HepG2 (cell line): ENCODE measurements at regions of chr12 and their contacts with region 1.

Region 1: GRCh38 chr12:81797100-81797499 is 38.0 kb upstream of the PPFIA2 start:
- DNase-seq: peak; percentile 6
- ATAC-seq: peak; percentile 66
- H3K4me3 ChIP-seq: no peak overlapping the region
- H3K27ac ChIP-seq: no peak overlapping the region
- H3K4me1 ChIP-seq: no peaks in the 10 kb centered on the region
- H3K27me3 ChIP-seq: no peaks in the 10 kb centered on the region
- CTCF ChIP-seq: no peak
- EP300 ChIP-seq: no peak
- POLR2A ChIP-seq: no peak
- RAD21 ChIP-seq: no peak

Region 2: GRCh38 chr12:81440001-81440400 is 357.1 kb before region 1 on chr12:
- CTCF ChIA-PET with region 1: no interaction called
- POLR2A ChIA-PET with region 1: no interaction called
- in situ Hi-C with region 1: no loop called
- intact Hi-C with region 1: loop called (anchors 10 kb)
- DNase-seq: no peak
- ATAC-seq: no peak
- H3K4me3 ChIP-seq: no peak overlapping the region
- H3K27ac ChIP-seq: no peak overlapping the region
- H3K4me1 ChIP-seq: no peaks in the 10 kb centered on the region
- H3K27me3 ChIP-seq: no peaks in the 10 kb centered on the region
- CTCF ChIP-seq: no peak
- EP300 ChIP-seq: no peak
- POLR2A ChIP-seq: no peak
- RAD21 ChIP-seq: no peak

Region 3: DNA sequence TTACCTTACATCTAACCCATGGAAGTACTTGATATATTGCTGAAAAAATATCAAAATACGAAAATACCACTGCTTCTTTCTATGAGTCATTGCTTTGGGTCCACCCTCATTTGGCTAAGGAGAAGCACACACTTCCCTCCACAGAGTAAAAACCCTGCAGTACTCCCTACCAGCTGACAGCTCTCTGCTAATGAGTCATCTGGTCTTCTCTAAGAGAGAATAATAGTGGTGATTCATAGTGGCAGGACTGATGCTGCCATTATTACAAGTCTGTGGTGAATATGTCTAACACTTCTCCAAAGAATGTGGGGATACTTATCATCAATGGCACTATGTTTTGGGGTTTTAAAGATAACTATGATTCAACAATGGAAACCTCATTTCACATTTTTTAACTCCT is 128.6 kb before region 1 on chr12:
- CTCF ChIA-PET with region 1: no interaction called
- POLR2A ChIA-PET with region 1: no interaction called
- in situ Hi-C with region 1: no loop called
- intact Hi-C with region 1: no loop called
- DNase-seq: no peak
- ATAC-seq: no peak
- H3K4me3 ChIP-seq: no peak overlapping the region
- H3K27ac ChIP-seq: no peak overlapping the region
- H3K4me1 ChIP-seq: no peaks in the 10 kb centered on the region
- H3K27me3 ChIP-seq: no peaks in the 10 kb centered on the region
- CTCF ChIP-seq: no peak
- EP300 ChIP-seq: no peak
- POLR2A ChIP-seq: no peak
- RAD21 ChIP-seq: no peak